Activated naive CD4-positive, alpha-beta T cell treated with anti-CD3 and anti-CD28 coated beads for 36 hours (primary cell): ENCODE measurements at regions of chr20 and their contacts with region 1.

Region 1: DNA sequence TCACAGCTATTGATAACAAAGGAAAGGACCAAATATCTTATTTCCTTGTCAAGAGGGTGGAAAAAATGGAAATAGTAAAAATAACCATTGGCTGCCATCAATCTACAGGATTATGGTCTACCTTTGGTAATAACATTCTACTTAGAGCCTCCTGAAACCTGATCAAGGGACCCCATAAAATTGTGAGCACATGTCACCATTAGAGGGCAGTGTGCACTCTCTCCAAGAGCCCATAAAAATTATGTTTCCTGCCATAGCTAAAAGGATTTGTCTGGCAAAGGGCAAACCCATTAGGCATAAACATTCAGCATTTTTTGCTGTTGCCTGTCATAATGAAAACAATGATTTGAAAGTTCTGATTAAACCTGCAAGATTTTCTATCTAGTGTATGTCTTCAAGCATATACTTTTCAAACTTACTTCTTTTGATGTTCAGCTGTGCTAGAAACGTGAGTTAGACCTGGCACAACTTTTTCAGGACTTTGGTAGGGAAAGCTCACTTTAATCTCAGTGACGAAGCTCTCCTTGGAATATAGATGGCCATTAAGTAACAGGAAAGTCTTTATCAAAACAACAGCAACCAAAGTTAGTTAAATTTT is 120.7 kb upstream of the ZFP64 start:
- DNase-seq: peak; percentile 79
- H3K4me3 Mint-ChIP-seq: no peak overlapping the region
- H3K27ac Mint-ChIP-seq: no peak overlapping the region
- H3K4me1 Mint-ChIP-seq: peaks cover 28% of the 10 kb centered on the region
- H3K27me3 Mint-ChIP-seq: no peaks in the 10 kb centered on the region

Region 2: DNA sequence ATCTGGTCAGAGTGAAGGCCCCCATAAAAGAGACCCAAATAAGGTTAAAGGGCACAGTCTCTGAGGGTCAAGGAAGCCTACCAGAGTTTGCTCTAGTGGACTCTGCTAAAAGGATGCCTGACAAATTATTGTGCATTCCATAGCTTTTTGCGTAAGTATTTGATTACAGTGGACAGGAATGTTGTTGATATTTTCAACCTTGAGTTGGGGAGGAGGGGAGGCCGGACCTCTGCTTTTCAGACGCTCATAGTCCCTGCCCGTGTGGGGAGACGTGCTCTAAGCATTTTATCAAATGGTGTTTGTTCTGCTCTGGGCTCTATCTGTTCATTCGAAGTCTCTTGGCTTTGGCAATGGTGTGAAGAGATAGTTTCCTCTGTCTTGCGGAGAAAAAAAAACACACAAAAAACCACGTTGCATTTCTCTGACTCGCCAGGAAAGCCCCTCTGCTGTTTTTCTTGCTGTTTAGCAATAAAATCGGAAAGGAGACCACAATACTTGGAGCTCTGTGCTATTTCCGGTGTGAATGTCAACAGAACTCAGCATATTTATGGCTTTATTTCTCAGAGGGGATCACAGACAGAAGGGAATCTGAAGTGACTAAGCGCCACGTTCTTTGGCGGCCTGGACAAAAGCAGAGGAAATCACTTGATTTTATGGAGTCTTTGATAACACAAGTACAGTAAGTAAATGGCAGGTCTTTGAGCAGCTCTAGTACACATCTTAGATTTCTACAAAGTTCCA is 280.5 kb before region 1 on chr20:
- CTCF ChIA-PET with region 1: no interaction called
- intact Hi-C with region 1: no loop called
- DNase-seq: peak; percentile 52
- H3K4me3 Mint-ChIP-seq: no peak overlapping the region
- H3K27ac Mint-ChIP-seq: no peak overlapping the region
- H3K4me1 Mint-ChIP-seq: peaks cover 10% of the 10 kb centered on the region
- H3K27me3 Mint-ChIP-seq: no peaks in the 10 kb centered on the region

Region 3: DNA sequence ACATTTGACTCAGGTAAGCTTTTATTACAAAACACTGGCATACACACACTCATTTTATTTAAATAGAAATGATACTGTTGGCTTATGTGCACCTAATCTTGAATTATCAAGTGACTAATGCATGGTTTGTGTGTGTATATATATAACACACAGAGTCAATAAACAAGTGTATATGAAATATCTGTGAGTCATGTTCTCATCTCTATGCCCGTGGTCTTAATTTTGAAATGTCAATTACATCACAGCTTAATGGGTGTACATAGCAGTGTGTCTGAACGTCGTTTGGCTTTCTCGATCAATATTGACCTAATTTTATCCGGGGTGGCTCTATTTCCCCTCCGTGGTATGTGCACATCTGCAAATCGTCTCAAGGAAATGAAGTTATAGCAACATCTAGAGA is 16.7 kb before region 1 on chr20:
- CTCF ChIA-PET with region 1: interaction called, 15 read pairs
- intact Hi-C with region 1: no loop called
- DNase-seq: no peak
- H3K4me3 Mint-ChIP-seq: no peak overlapping the region
- H3K27ac Mint-ChIP-seq: no peak overlapping the region
- H3K4me1 Mint-ChIP-seq: no peaks in the 10 kb centered on the region
- H3K27me3 Mint-ChIP-seq: no peaks in the 10 kb centered on the region

Region 4: GRCh38 chr20:52494244-52494643 is 182.0 kb after region 1 on chr20:
- CTCF ChIA-PET with region 1: no interaction called
- intact Hi-C with region 1: loop called (anchors 5 kb)
- DNase-seq: peak; percentile 82
- H3K4me3 Mint-ChIP-seq: peak overlapping the region; percentile 46
- H3K27ac Mint-ChIP-seq: peak overlapping the region; percentile 50
- H3K4me1 Mint-ChIP-seq: peaks cover 23% of the 10 kb centered on the region
- H3K27me3 Mint-ChIP-seq: no peaks in the 10 kb centered on the region

Region 5: DNA sequence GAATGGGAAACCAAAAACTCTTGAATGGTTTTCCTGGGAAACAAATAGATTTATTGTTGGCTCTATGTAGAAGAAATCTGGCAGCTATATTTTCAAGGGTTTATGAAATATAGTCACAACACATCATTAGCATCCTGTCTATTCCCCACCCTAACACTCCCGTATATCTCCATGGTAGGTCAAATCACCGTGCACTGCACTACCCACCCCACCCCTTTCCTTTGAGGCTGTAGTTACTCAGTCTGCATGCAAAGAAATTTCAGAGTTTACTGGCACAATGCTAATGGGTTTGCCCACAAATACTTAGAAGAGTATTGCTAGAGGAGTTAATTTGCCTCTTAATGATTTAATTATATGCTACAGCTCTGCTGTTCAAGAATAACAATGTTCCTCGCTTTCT is 330.8 kb after region 1 on chr20:
- CTCF ChIA-PET with region 1: no interaction called
- intact Hi-C with region 1: no loop called
- DNase-seq: no peak
- H3K4me3 Mint-ChIP-seq: no peak overlapping the region
- H3K27ac Mint-ChIP-seq: no peak overlapping the region
- H3K4me1 Mint-ChIP-seq: no peaks in the 10 kb centered on the region
- H3K27me3 Mint-ChIP-seq: no peaks in the 10 kb centered on the region

Region 6: DNA sequence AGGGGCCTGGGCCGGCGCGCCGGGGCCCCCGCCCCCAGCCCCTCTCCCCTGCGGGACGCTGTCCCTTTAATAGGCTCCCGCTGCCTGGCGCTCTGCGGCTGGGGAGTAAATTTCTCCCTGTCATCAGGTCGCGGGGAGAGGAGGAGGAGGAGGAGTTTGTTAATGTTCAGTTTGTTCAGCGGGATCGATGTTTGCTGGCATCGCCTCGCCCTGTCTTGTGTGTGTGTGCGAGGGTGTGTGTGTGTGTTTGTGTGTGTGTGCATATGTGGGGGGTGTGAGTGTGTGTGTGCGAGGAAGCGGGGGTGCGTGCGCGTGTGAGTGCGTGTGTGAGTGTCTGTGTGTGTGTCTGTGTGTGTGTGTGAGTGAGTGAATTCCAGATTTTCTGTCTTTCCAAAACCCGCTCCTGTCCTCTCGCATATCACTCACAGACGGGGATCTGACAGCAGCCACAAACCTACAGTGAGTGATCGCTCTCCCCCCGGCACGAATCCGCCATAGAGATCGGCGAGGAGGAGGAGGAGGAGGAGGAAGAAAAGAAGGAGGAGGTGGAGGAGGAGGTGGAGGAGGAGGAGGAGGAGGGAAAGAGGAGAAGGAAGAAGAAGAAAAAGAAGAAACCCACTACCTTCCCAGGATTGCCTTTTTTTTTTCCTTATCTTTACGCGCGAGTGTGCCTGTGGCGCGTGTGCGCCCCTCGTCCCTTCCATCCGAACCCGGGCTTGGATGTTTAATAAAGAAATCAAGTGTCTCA is 660.1 kb after region 1 on chr20 and contains the start of gene TSHZ2:
- CTCF ChIA-PET with region 1: no interaction called
- intact Hi-C with region 1: loop called (anchors 5 kb)
- DNase-seq: peak; percentile 73
- H3K4me3 Mint-ChIP-seq: peak within 1 kb of the TSS; percentile 94
- H3K27ac Mint-ChIP-seq: peak within 1 kb of the TSS; percentile 98
- H3K4me1 Mint-ChIP-seq: peaks cover 34% of the 10 kb centered on the region
- H3K27me3 Mint-ChIP-seq: no peaks in the 10 kb centered on the region
- total RNA-seq, gene TSHZ2: 34.1 to 37.8 TPM

Region 7: DNA sequence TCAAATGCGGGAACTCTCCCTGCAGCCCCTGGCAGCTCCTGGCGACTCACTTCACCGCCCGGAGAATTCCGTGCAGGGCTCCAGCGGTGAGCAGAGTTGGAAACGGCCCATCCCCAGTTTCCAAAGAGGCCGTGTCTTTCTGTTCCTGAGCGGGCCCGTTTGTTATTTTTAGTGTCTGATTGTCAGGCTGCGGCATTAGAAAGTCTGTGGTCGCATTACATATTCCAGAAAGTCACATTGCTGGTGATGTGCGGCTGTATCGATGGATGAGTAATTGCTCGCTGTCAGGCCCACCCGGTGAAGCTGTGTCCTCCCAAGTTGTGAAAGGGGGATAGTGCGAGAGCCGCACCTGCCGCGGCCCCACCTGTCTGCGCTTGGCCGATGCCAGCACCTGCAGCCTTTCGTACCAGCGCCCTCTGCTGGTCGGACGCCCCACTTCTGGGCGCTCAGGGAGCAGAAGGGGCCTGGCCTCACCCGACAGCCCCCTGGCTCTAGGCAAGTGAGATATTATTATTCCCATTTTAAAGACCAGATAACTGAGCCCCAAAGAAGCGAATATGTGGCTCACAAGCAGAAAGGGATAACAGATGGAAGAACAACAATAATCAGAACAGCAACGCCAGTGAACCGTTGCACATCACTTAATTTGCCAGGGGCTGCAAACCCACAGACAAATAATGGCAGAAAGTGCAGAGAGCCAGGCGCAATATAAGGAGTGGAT is 904.8 kb after region 1 on chr20:
- CTCF ChIA-PET with region 1: interaction called, 9 read pairs
- intact Hi-C with region 1: loop called (anchors 1 kb)
- DNase-seq: peak; percentile 88
- H3K4me3 Mint-ChIP-seq: peak overlapping the region; percentile 38
- H3K27ac Mint-ChIP-seq: peak overlapping the region; percentile 88
- H3K4me1 Mint-ChIP-seq: peaks cover 55% of the 10 kb centered on the region
- H3K27me3 Mint-ChIP-seq: no peaks in the 10 kb centered on the region